AG04449 (cell line): ENCODE measurements at regions of chr7 and their contacts with region 1.

Region 1: GRCh38 chr7:129163875-129164544 is 19.5 kb downstream of the TSPAN33 start:
- DNase-seq: peak; percentile 14
- H3K4me3 ChIP-seq: no peak overlapping the region
- CTCF ChIP-seq: peak; percentile 59

Region 2: DNA sequence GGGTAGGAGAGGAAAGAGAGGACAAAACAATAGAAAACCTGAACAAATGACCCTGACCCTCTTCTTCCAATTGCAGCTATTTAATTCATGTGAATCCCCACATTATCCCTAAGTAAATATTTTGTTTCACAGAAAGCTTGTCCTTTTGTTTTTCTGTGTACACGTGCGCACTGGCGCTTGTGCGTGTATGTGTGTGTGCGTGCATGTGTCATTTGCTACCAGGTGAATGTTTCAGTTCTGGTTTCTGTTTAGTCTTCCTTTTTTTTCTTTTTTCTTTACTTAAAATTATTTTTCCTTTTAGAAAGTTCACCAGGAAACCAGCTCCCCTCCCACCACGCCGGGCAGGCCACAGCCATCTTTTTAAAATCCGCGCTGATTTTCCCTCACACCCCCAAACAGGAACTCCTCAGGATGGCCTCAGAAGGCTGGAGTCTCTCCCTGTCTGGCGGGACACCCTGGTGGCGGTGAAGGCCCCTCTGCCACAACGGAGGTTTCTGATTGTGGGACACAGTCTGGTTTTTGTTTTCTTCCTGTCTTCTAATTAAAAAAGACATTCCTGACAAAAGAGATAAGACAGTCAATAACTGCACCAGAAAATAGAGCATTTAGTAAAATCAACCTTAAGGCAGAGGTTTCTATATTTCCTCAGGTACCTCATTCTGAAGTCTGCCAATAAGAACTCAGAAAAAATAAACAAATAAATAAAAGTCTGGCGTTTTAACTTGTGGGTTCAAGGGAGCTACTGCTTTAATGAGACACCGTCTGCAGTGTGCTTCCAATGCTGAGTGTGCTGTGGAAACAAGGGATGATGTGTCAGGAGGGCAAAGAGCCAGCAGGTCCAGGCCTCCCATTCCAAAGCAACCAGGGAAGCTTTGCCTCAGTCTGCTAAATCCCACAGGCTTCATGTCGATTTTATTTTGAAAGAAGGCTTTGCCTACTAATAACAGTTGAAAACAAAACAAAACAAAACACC is 208.9 kb before region 1 on chr7:
- CTCF ChIA-PET with region 1: no interaction called
- POLR2A ChIA-PET with region 1: no interaction called
- DNase-seq: peak; percentile 36
- H3K4me3 ChIP-seq: no peak overlapping the region
- CTCF ChIP-seq: no peak

Region 3: GRCh38 chr7:129144095-129144833 is 19.7 kb before region 1 on chr7 and contains the start of gene TSPAN33:
- CTCF ChIA-PET with region 1: interaction called, 41 read pairs
- POLR2A ChIA-PET with region 1: no interaction called
- DNase-seq: no peak
- H3K4me3 ChIP-seq: peak within 1 kb of the TSS; percentile 46
- CTCF ChIP-seq: no peak

Region 4: GRCh38 chr7:129150199-129150996 is 13.6 kb before region 1 on chr7:
- CTCF ChIA-PET with region 1: interaction called, 41 read pairs
- POLR2A ChIA-PET with region 1: no interaction called
- DNase-seq: no peak
- H3K4me3 ChIP-seq: no peak overlapping the region
- CTCF ChIP-seq: no peak

Region 5: DNA sequence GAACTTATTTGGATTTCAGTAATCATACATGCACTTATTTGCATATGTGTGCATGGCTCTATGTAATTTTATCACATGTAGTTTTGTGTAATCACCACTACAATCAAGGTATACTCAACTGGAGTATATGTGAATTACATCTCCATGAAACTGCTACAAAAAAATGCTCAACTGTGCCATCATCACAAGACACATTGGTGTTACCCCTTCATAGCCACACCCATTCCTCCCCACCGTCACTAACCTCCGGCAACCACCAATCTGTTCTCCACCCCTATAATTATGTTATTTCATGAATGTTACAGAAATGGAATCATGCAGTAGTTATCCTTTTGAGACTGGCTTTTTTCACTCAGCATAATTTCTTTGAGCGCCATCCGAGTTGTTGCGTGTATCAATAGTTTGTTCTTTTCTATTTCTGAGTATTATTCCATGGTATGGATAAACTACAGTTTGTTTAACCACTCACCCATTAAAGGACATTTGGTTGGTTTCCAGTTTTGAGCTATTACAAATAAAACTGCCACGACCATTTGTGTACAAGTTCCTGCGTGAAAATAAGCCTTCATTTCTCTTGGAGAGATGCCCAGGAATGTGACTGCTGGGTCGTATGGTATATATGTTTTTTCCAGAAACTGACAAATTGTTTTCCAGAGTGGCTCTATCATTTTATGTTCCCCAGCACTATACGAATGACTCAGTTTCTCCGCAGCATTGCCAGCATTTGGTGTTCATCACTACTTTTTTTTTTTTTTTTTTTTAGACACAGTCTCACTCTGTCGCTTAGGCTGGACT is 13.1 kb after region 1 on chr7:
- CTCF ChIA-PET with region 1: interaction called, 28 read pairs
- POLR2A ChIA-PET with region 1: no interaction called
- DNase-seq: no peak
- H3K4me3 ChIP-seq: no peak overlapping the region
- CTCF ChIP-seq: no peak

Region 6: DNA sequence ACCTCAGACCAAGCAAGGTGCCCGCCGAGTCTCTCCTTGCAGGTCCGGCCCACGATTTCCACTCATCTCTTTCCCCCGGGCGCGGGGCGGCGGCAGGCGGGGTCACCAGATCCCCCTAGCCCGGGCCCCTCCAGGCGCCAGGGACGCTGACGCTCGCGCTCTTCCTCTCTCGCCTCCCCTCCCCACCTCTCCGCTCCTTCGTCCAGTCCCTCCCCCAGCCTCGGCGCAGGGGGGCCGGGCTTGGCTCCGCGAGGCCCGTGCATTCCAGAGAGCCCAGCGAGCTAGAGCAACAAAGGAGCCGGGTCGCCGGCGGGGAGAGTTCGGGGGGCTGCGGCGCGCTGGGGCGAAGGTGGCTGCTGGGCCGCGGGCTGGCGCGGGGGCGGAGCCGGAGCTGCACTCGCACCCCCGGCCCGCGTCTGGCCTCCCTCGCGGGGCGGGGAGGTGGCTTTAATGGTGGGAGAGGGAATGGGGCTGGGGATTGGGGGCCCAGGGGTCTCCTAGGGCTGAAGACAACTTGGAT is 24.4 kb after region 1 on chr7 and contains the start of gene SMO:
- CTCF ChIA-PET with region 1: interaction called, 18 read pairs
- POLR2A ChIA-PET with region 1: interaction called, 3 read pairs
- DNase-seq: no peak
- H3K4me3 ChIP-seq: peak within 1 kb of the TSS; percentile 77
- CTCF ChIP-seq: no peak